SK-N-SH (cell line): ENCODE measurements at regions of chr5 and their contacts with region 1.

Region 1: GRCh38 chr5:172932313-172933017 is 26.8 kb upstream of the RPL26L1 start:
- DNase-seq: peak; percentile 86
- H3K4me3 ChIP-seq: no peak overlapping the region; a peak in 1 of 4 replicates
- H3K27ac ChIP-seq: peak overlapping the region in 1 of 2 experiments; percentile 89; a peak in 2 of 4 replicates
- H3K4me1 ChIP-seq: peaks cover 0 to 19% of the 10 kb centered on the region in 2 experiments; a peak in 2 of 4 replicates
- H3K27me3 ChIP-seq: no peaks in the 10 kb centered on the region
- CTCF ChIP-seq: peak; percentile 91
- EP300 ChIP-seq: no peak
- RAD21 ChIP-seq: peak; percentile 87

Region 2: DNA sequence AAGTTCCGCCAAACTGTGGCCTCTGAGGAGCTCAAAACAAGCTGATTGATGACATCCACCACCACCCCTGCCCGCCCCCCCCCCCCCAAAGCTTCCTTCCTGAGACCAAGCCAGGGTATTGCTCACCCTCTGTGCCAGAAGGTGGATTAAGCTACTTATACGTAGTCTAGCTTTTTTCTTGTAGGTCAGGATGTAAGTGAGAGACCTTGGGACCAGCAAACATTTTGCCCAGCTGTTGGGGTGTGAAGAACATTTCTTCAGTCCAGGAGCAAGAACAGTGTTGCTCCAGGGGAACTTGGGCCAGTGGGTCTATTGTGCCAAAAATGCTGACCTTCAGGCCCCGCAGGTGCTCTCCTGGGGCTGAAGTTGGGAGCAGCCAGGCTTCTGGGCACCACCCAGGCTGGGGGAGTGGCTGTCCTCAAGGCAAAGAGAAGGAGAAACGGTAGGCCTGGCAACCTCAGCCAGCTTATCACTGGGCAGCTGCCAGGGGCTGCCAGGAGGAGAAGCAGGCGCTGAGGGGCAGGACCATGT is 273.4 kb before region 1 on chr5:
- CTCF ChIA-PET with region 1: no interaction called
- POLR2A ChIA-PET with region 1: no interaction called
- DNase-seq: peak; percentile 67
- H3K4me3 ChIP-seq: no peak overlapping the region
- H3K27ac ChIP-seq: peak overlapping the region; percentile 48 to 87
- H3K4me1 ChIP-seq: peaks cover 20 to 28% of the 10 kb centered on the region in 2 experiments; a peak in 3 of 4 replicates
- H3K27me3 ChIP-seq: no peaks in the 10 kb centered on the region
- CTCF ChIP-seq: no peak
- EP300 ChIP-seq: peak in 1 of 2 experiments; percentile 31; a peak in 1 of 4 replicates
- RAD21 ChIP-seq: no peak

Region 3: DNA sequence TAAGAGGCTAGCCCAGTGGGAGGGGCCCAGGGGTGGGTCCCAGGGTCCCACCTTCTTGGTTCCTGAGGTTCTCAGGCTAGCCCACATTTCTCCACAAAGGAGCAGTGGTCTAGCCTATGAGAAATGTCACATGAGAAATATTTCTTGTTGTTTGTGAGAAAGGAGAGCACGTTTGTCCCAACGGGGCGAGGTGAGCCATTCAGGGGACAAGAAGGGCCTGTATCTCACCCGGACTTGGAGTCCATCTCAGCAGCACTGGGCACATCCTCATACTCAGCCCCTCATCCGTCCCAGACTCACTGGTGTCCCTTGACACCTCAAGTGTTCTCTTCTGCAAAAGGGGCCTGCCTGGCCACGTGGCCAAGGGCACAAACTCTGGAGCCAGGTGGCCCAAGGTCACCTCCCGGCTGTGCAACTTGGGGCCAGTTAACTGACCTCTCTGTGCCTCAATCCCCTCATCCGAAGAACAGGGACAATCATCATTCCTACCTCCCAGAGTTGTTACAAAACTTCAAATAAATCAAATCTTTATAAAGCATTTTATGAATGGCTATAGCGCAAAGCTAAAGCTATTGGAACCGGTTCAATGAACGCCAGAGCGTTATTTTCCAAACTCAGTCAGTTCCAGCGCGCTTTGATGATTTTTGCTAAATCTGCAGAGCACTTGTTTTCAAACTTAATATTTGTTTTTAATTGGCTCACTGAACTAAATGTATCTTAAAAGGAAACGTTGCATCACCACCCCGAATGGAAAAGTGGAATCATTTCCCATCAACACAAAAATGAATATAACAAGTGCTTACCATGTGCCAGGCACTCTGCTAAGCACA is 210.9 kb before region 1 on chr5:
- CTCF ChIA-PET with region 1: interaction called, 74 read pairs
- POLR2A ChIA-PET with region 1: interaction called, 4 read pairs
- DNase-seq: no peak
- H3K4me3 ChIP-seq: no peak overlapping the region
- H3K27ac ChIP-seq: no peak overlapping the region
- H3K4me1 ChIP-seq: peaks cover 5% of the 10 kb centered on the region in 2 experiments; a peak in 2 of 4 replicates
- H3K27me3 ChIP-seq: no peaks in the 10 kb centered on the region
- CTCF ChIP-seq: no peak
- EP300 ChIP-seq: no peak
- RAD21 ChIP-seq: no peak

Region 4: DNA sequence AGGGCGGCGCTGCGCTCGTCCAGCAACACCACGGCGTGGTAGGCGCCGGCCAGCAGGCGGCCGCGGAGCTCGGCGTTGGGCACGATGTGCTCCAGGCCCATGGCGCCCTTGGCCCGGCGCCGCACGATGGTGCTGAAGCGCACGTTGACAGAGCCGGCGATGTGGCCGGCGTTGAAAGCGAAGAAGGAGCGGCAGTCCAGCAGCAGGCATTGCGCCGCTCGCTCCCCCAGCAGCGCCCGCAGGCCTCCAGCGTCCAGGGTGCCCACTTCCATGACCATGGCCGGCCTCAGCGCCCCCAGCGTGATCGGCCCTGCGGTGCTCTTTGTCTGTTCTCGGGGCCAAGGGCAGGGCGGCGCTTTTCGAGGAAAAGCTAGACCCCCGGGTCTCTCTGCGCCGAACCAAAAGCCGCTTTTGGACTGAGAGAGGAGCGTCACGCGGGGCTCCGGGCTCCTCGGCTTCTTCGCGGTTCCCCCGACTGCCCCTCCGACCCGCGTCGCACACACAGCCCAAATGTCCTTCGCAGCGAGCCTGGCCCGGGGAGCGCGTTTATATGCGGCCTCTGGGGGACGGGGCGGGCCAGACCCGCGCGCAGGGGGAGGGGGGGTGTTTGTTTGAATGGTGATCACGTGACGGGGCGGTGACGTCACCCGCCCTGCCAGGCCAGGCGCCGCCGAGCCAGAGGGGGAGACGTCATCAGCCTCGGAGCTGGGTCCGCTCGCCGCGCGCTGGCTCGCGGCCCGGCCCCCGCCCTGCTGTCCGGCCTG is 161.6 kb before region 1 on chr5 and contains the start of gene DUSP1:
- CTCF ChIA-PET with region 1: interaction called, 49 read pairs
- POLR2A ChIA-PET with region 1: no interaction called
- DNase-seq: peak; percentile 99
- H3K4me3 ChIP-seq: peak within 1 kb of the TSS; percentile 89 to 93
- H3K27ac ChIP-seq: peak within 1 kb of the TSS; percentile 97 to 100
- H3K4me1 ChIP-seq: peaks cover 23 to 36% of the 10 kb centered on the region in 2 experiments
- H3K27me3 ChIP-seq: no peaks in the 10 kb centered on the region
- CTCF ChIP-seq: peak; percentile 50
- EP300 ChIP-seq: no peak
- RAD21 ChIP-seq: peak; percentile 36
- polyA plus RNA-seq, gene DUSP1: 373 and 455 TPM in 2 replicates

Region 5: DNA sequence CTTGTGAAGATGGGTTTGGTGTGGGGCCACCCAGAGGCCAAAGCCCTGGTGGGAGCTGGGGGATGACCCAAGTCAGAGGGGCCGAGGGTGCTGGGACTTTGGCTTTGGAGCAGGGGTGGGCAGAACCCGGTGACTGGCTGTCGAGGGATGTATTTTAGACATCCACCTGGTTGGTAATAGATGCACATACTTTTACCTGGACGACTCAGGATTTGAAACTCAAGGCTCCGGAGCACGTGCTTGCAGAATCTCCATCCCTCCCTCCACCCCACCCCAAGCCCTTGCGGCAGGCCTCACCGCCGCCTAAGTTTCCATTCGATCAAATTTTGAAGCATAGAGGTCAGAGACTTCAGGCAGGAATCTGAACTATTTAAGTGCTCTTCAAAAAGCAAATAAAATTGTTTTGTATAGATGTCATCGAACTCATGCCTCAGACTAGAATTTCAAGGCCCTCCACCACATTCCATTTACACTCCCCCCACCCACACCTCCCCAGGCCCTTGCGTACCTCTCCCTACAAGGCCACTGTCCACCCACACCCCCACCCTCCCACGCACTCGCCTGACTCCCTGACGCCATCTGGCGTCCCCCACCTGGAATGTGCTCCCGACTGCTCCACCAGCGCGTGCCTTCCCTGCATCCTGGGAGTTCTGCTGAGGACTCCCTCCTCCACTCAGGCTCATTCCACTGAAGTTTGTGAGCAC is 29.8 kb before region 1 on chr5:
- CTCF ChIA-PET with region 1: interaction called, 17 read pairs
- POLR2A ChIA-PET with region 1: interaction called, 3 read pairs
- DNase-seq: peak; percentile 72
- H3K4me3 ChIP-seq: no peak overlapping the region
- H3K27ac ChIP-seq: peak overlapping the region in 1 of 2 experiments; percentile 100; a peak in 2 of 4 replicates
- H3K4me1 ChIP-seq: peaks cover 30 to 68% of the 10 kb centered on the region in 2 experiments
- H3K27me3 ChIP-seq: no peaks in the 10 kb centered on the region
- CTCF ChIP-seq: peak; percentile 50
- EP300 ChIP-seq: no peak
- RAD21 ChIP-seq: peak; percentile 58

Region 6: DNA sequence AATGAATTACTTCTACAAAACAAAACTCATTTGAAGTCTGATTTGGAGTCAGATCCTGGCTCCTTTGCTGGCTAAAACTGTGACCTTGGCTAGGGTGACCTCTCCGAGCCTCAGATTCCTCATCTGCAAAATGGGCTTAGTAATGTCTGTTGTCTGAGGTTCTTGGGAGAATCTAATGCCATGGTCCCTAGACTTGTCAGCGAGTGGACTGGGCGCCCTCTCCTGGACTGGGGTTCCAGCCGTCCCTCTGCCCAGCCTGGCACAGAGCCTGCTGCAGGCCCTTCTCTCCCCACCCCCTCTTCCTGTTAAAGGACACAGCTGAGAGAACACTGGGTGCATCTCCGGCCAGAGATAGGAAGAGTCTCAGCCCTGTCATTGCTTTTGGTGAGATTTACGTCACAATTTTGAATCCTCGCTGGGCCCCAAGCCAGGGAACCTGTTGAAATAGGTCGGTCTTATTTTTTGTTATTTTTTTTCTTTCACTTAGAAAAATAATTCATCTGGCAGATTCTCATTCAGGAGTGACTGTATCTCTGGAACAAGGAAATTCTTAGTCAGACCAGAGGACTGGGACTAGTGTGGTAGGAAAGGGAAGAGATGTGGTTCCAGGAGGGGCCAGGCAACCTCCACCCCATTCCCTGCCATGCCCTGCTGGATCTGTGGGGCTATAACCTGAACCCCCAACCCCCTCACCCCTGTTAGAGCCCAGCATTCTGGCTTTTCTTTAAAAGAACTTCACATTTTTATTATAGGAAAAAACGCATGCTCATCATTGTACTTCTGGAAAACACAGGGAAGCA is 21.4 kb before region 1 on chr5:
- CTCF ChIA-PET with region 1: interaction called, 17 read pairs
- POLR2A ChIA-PET with region 1: no interaction called
- DNase-seq: peak; percentile 75
- H3K4me3 ChIP-seq: no peak overlapping the region
- H3K27ac ChIP-seq: peak overlapping the region in 1 of 2 experiments; percentile 88; a peak in 2 of 4 replicates
- H3K4me1 ChIP-seq: peaks cover 0 to 16% of the 10 kb centered on the region in 2 experiments; a peak in 2 of 4 replicates
- H3K27me3 ChIP-seq: no peaks in the 10 kb centered on the region
- CTCF ChIP-seq: peak; percentile 63
- EP300 ChIP-seq: no peak; a peak in 1 of 4 replicates
- RAD21 ChIP-seq: peak; percentile 67

Region 7: GRCh38 chr5:172920447-172920849 is 12.0 kb before region 1 on chr5:
- CTCF ChIA-PET with region 1: interaction called, 24 read pairs
- POLR2A ChIA-PET with region 1: no interaction called
- DNase-seq: no peak
- H3K4me3 ChIP-seq: no peak overlapping the region
- H3K27ac ChIP-seq: peak overlapping the region in 1 of 2 experiments; percentile 91; a peak in 2 of 4 replicates
- H3K4me1 ChIP-seq: peaks cover 0 to 11% of the 10 kb centered on the region in 2 experiments; a peak in 2 of 4 replicates
- H3K27me3 ChIP-seq: no peaks in the 10 kb centered on the region
- CTCF ChIP-seq: no peak
- EP300 ChIP-seq: peak in 1 of 2 experiments; percentile 79; a peak in 1 of 4 replicates
- RAD21 ChIP-seq: no peak

Region 8: DNA sequence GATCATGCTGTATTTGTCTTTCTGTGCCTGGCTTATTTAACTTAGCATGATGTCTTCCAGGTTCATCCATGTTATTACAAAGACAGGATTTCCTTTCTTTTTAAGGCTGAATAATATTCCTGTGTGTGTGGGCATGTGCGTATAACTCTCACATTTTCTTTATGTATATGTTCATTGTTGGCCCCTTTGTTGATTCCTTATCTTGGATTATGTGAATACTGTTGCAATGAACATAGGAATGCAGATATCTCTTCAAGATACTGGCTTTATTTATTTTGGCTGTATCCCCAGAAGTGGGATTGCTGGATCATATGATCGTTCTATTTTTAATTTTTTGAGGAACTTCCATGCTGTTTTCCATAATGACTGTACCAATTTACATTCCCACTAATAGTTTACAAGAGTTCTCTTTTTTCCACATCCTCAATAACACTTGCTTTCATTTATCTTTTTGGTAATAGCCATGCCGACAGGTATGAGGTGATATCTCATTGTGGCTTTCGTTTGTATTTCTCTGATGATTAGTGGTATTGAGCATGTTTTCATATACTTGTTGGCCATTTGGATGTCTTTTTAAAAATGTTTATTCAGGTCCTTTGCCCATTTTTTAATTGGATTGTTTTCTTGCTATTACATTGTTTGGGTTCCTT is 161.7 kb after region 1 on chr5:
- CTCF ChIA-PET with region 1: no interaction called
- POLR2A ChIA-PET with region 1: no interaction called
- DNase-seq: no peak
- H3K4me3 ChIP-seq: no peak overlapping the region
- H3K27ac ChIP-seq: peak overlapping the region in 1 of 2 experiments; percentile 79; a peak in 3 of 4 replicates
- H3K4me1 ChIP-seq: peaks cover 0 to 9% of the 10 kb centered on the region in 2 experiments; a peak in 1 of 4 replicates
- H3K27me3 ChIP-seq: no peaks in the 10 kb centered on the region
- CTCF ChIP-seq: no peak
- EP300 ChIP-seq: peak in 1 of 2 experiments; percentile 67; a peak in 1 of 4 replicates
- RAD21 ChIP-seq: no peak

Region 9: GRCh38 chr5:173420108-173420507 is 487.6 kb after region 1 on chr5:
- CTCF ChIA-PET with region 1: no interaction called
- POLR2A ChIA-PET with region 1: no interaction called
- DNase-seq: peak; percentile 39
- H3K4me3 ChIP-seq: no peak overlapping the region; a peak in 1 of 4 replicates
- H3K27ac ChIP-seq: no peak overlapping the region
- H3K4me1 ChIP-seq: no peaks in the 10 kb centered on the region; a peak in 1 of 4 replicates
- H3K27me3 ChIP-seq: no peaks in the 10 kb centered on the region
- CTCF ChIP-seq: no peak
- EP300 ChIP-seq: no peak
- RAD21 ChIP-seq: no peak